Activated naive CD4-positive, alpha-beta T cell treated with anti-CD3 and anti-CD28 coated beads for 36 hours (primary cell): ENCODE measurements at regions of chr11 and their contacts with region 1.

Region 1: DNA sequence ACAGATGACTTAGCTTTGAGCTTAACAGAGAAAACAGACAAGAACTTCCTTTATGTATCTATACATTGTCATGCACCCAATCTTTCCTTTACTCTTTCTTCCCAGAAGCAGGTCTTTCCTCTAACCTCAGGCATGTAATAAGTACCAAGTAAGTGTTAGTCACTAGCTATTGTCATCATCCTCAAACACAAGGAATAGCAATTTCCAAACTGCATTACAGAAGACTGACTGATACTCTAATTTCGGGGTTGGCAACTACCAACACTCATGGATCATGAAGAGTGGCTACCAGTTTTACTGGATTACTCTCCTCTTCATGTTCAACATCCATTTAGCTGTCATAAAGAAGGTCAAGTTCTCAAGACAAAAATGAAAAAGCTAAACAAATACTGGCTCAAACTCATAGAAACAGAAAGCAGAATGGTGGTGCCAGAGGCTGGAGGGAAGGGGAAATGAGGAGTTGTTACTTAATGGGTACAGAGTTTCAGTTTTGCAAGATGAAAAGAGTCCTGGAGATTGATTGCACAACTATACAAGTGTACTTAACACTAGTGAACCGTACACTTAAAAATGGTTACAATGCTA is 111.6 kb downstream of the SIK3 start:
- DNase-seq: peak; percentile 50
- H3K4me3 Mint-ChIP-seq: peak overlapping the region; percentile 48
- H3K27ac Mint-ChIP-seq: peak overlapping the region; percentile 85
- H3K4me1 Mint-ChIP-seq: peaks cover 74% of the 10 kb centered on the region
- H3K27me3 Mint-ChIP-seq: no peaks in the 10 kb centered on the region

Region 2: GRCh38 chr11:116927163-116927974 is 59.2 kb before region 1 on chr11:
- CTCF ChIA-PET with region 1: interaction called, 3 read pairs
- intact Hi-C with region 1: loop called (anchors 1 kb)
- DNase-seq: peak; percentile 73
- H3K4me3 Mint-ChIP-seq: peak overlapping the region; percentile 34
- H3K27ac Mint-ChIP-seq: peak overlapping the region; percentile 75
- H3K4me1 Mint-ChIP-seq: peaks cover 61% of the 10 kb centered on the region
- H3K27me3 Mint-ChIP-seq: no peaks in the 10 kb centered on the region

Region 3: GRCh38 chr11:117002639-117003299 is 16.2 kb after region 1 on chr11:
- CTCF ChIA-PET with region 1: no interaction called
- intact Hi-C with region 1: loop called (anchors 1 kb)
- DNase-seq: no peak
- H3K4me3 Mint-ChIP-seq: no peak overlapping the region
- H3K27ac Mint-ChIP-seq: no peak overlapping the region
- H3K4me1 Mint-ChIP-seq: peaks cover 58% of the 10 kb centered on the region
- H3K27me3 Mint-ChIP-seq: no peaks in the 10 kb centered on the region

Region 4: GRCh38 chr11:117026593-117027330 is 40.1 kb after region 1 on chr11:
- CTCF ChIA-PET with region 1: interaction called, 3 read pairs
- intact Hi-C with region 1: loop called (anchors 1 kb)
- DNase-seq: peak; percentile 16
- H3K4me3 Mint-ChIP-seq: peak overlapping the region; percentile 14
- H3K27ac Mint-ChIP-seq: peak overlapping the region; percentile 84
- H3K4me1 Mint-ChIP-seq: peaks cover 68% of the 10 kb centered on the region
- H3K27me3 Mint-ChIP-seq: no peaks in the 10 kb centered on the region

Region 5: GRCh38 chr11:117072517-117073461 is 86.2 kb after region 1 on chr11:
- CTCF ChIA-PET with region 1: interaction called, 3 read pairs
- intact Hi-C with region 1: loop called (anchors 2 kb)
- DNase-seq: no peak
- H3K4me3 Mint-ChIP-seq: no peak overlapping the region
- H3K27ac Mint-ChIP-seq: peak overlapping the region; percentile 30
- H3K4me1 Mint-ChIP-seq: peaks cover 63% of the 10 kb centered on the region
- H3K27me3 Mint-ChIP-seq: no peaks in the 10 kb centered on the region